OCI-LY7 (cell line): ENCODE measurements at regions of chr16 and their contacts with region 1.

Region 1: DNA sequence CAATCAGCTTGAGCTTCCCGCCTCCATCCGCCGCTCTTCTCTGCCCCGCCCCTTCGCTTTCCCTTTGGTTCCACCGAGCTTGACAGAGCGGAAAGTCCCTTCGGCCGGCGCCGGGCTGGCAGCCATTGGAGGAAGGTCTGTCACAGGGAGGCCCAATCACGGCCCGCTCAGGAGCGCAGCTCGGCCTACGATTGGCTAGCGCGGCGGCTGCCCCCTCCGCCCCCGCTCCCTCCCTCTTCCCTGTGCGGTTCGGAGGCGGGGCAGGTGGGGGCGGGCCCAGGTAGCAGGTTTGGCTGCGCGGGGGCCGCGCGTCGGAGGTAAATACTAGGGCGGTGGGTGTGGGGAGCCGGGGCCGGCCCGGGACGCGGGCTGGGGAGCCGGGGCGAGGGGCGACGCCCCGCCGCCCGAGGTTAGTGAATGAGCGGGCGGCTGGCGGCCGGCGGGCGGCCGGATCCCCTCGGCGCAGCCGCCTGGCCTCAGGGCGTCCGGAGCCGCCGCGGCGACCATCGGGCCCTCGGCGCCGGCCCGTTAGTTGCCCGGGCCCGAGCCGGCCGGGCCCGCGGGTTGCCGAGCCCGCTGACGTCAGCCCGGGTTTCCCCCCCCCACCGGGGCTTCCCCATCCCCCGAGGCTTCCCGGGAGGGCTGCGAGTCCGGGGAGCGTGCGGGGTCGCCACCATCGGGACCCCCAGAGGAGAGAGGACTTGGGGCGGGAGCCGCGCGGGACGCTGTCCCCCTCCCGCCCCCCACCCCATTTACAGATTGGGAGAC is at the start of gene CYLD:
- DNase-seq: peak; percentile 99
- H3K4me3 ChIP-seq: peak within 1 kb of the TSS; percentile 78
- H3K27ac ChIP-seq: no peak within 1 kb of the TSS
- H3K4me1 ChIP-seq: peaks cover 12% of the 10 kb centered on the region
- CTCF ChIP-seq: no peak
- total RNA-seq, gene CYLD: 7.4 and 14.0 TPM in 2 replicates

Region 2: DNA sequence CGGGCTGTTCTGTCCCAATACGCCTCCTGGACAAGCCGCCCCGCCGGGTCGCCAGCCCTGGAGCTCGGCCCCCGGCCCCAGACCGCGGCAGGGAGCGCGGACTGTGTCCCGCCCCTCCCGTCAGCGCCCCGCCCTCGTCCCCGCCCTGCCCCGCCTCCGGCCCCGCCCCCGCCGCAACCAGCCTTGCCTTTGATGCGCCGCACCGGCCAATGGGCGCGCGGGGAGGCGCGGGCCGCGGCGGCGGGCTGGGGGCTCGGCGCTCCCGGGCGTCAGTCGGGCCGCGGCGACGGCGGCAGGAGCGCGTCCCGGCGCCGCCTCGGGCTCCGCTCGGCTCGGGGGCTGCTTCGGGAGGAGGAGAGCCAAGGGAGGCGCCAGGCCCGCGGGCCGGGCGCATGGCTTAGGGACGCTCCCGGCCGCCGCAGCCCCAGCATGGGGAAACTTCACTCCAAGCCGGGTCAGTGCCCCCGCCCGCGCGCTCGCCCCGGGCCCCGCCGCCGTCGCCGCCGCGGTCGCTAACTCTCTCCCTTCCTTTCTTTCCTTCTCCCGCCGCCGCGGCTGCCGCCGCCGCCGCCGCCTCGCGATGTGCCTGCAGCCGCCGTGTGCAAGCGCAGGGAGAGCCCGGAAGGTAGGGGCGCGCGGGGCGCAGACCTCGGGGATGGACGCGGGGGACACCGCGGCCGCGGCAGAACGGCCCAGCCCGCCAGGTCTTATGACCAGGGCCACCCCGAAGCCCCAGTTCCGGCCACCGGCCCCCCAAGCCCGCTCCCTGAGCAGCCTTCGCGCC is 193.7 kb before region 1 on chr16 and contains the start of gene NKD1:
- CTCF ChIA-PET with region 1: interaction called, 5 read pairs
- POLR2A ChIA-PET with region 1: no interaction called
- intact Hi-C with region 1: loop called (anchors 10 kb)
- DNase-seq: peak; percentile 71
- H3K4me3 ChIP-seq: peak within 1 kb of the TSS; percentile 66
- H3K27ac ChIP-seq: no peak within 1 kb of the TSS
- H3K4me1 ChIP-seq: no peaks in the 10 kb centered on the region
- CTCF ChIP-seq: no peak
- total RNA-seq, gene NKD1: 0.06 TPM in 1 of 2 replicates, not detected in the other

Region 3: GRCh38 chr16:50709053-50709684 is 32.8 kb before region 1 on chr16:
- CTCF ChIA-PET with region 1: no interaction called
- POLR2A ChIA-PET with region 1: no interaction called
- intact Hi-C with region 1: no loop called
- DNase-seq: peak; percentile 11
- H3K4me3 ChIP-seq: no peak overlapping the region
- H3K27ac ChIP-seq: no peak overlapping the region
- H3K4me1 ChIP-seq: no peaks in the 10 kb centered on the region
- CTCF ChIP-seq: no peak